Right ventricle myocardium inferior (tissue), 1 donor: ENCODE measurements at regions of chr6 and their contacts with region 1.

Region 1: GRCh38 chr6:36885461-36886401 is at the start of gene C6orf89:
- DNase-seq: peak; percentile 99
- ATAC-seq: peak; percentile 99
- total RNA-seq, gene C6orf89: 79.4 TPM

Region 2: GRCh38 chr6:36979347-36979742 is 93.6 kb after region 1 on chr6:
- intact Hi-C with region 1: loop called (anchors 1 kb)
- DNase-seq: no peak
- ATAC-seq: peak; percentile 72

Region 3: GRCh38 chr6:37018198-37019064 is 132.7 kb after region 1 on chr6:
- intact Hi-C with region 1: loop called (anchors 1 kb)
- DNase-seq: peak; percentile 92
- ATAC-seq: peak; percentile 97

Region 4: DNA sequence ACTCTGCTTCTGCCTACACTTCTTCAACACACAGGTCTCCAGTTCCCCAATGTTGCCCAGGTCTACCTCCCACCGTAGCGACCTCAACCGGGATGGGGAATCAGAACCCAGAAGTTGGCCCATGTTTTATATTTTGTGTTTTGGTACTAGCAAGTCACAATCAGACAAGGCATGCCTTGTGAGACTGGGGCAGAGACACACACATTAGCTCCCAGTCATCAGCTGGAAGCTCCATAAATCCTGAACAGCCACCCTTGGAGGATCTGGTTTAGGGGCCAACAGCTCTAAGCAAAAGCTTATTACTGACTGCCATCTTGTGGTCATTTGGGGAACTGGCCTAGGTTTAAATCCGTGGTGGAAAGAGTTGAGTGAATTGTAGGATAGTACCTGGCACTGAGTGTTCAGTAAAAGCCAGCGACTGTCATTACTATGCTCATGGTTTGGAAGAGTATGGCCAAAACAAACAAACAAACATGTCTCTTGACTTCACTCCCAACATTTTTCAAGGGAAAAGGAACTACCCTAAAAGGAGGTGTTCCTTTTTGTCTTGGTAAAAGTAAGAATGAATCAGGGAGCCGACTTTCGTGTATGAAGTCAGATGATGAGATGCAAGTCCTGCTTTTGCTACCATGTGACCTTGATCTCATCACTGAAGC is 324.7 kb after region 1 on chr6:
- intact Hi-C with region 1: loop called (anchors 5 kb)
- DNase-seq: no peak
- ATAC-seq: peak; percentile 83